H1 (cell line): ENCODE measurements at regions of chr5 and their contacts with region 1.

Region 1: DNA sequence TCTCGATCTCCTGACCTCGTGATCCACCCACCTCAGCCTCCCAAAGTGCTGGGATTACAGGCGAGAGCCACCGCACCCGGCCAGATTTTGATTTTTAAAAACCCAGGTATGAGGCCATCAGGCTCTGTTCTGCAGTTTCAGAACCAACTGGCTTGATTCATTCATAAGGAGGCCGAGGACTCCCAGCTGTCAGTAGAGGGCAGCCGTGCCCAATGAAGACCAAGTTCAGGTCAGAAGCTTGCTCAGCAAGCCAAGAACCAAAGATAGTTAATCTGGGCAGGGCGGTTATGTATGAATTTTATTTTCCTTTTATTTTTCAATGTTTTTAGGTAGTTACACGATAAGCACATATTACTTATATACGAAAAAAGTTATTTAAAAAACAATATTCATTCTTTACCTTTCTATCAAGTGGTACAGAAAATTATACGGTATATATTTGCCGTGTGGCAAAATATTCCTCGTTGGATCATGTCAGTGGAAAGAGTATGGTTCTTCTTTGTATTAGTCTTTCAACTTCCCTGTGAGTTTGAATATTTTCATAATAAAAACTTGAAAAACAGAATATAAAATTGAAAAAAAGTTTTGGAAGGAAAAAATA is 18.0 kb downstream of the MGAT1 start:
- DNase-seq: peak in 1 of 2 experiments; percentile 67
- H3K4me3 ChIP-seq: no peak overlapping the region; a peak in 1 of 8 replicates
- H3K27ac ChIP-seq: no peak overlapping the region
- H3K4me1 ChIP-seq: peaks cover 17 to 34% (median 26%) of the 10 kb centered on the region in 4 experiments
- H3K27me3 ChIP-seq: no peaks in the 10 kb centered on the region
- CTCF ChIP-seq: peak in 2 of 3 experiments; percentile 72 to 77; a peak in 3 of 4 replicates
- EP300 ChIP-seq: no peak
- POLR2A ChIP-seq: no peak
- RAD21 ChIP-seq: peak; percentile 80 to 89

Region 2: DNA sequence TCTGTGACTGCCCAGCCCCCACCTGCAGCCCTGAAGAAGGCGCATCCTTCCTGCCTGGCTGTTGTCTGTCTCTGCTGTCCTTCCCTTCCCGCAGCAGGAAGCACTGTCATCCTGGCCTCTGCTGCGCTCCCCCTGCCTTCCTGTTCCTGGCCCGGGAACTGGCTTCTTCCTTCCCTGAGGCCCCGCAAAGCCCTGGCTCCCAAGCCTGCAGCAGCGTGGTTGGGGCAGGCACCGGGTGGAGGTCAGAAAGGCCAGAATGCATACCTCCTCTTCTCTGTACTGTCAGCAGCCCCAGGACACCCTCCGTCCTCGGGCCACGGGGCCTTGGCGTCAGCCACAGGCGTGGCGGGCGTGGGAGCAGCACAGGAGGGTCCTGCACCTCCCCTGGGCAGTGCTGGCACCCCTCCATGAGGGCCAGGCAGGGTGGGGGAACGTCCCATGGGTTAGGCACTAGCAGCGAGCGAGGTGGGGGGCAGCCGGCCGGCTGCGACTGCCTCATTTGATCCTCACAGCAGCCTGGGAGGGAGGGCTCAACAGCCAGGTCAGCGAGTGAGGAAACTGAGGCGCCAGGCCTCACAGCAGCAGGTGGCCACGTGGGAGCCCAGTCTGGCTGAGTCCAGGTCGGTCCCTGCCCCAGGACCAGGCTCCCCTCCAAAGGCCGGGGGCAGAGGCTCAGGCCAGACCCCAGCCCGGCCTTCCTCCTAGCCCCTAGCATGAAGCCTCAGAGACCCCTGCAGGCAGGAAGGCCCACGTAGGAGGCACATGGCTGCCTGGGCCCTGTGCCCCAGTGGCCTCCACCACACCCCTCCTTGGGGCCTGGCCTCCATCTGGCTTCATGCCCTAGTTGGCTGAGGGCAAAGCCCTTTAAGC is 144.6 kb before region 1 on chr5:
- CTCF ChIA-PET with region 1: no interaction called
- POLR2A ChIA-PET with region 1: no interaction called
- DNase-seq: peak in 1 of 2 experiments; percentile 38
- H3K4me3 ChIP-seq: no peak overlapping the region
- H3K27ac ChIP-seq: no peak overlapping the region
- H3K4me1 ChIP-seq: no peaks in the 10 kb centered on the region
- H3K27me3 ChIP-seq: no peaks in the 10 kb centered on the region
- CTCF ChIP-seq: no peak
- EP300 ChIP-seq: no peak
- POLR2A ChIP-seq: no peak
- RAD21 ChIP-seq: no peak

Region 3: GRCh38 chr5:180802325-180803180 is 18.0 kb after region 1 on chr5 and contains the start of gene MGAT1:
- CTCF ChIA-PET with region 1: interaction called, 99 read pairs
- POLR2A ChIA-PET with region 1: interaction called, 37 read pairs
- DNase-seq: peak in 1 of 2 experiments; percentile 90
- H3K4me3 ChIP-seq: peak within 1 kb of the TSS; percentile 70 to 95 (median 84)
- H3K27ac ChIP-seq: peak within 1 kb of the TSS; percentile 95
- H3K4me1 ChIP-seq: peaks cover 4 to 24% (median 16%) of the 10 kb centered on the region in 4 experiments
- H3K27me3 ChIP-seq: no peaks in the 10 kb centered on the region
- CTCF ChIP-seq: no peak
- EP300 ChIP-seq: no peak
- POLR2A ChIP-seq: peak in 1 of 2 experiments; percentile 68; a peak in 2 of 3 replicates
- RAD21 ChIP-seq: no peak
- total RNA-seq, gene MGAT1: 77.0 and 83.8 TPM in 2 replicates

Region 4: DNA sequence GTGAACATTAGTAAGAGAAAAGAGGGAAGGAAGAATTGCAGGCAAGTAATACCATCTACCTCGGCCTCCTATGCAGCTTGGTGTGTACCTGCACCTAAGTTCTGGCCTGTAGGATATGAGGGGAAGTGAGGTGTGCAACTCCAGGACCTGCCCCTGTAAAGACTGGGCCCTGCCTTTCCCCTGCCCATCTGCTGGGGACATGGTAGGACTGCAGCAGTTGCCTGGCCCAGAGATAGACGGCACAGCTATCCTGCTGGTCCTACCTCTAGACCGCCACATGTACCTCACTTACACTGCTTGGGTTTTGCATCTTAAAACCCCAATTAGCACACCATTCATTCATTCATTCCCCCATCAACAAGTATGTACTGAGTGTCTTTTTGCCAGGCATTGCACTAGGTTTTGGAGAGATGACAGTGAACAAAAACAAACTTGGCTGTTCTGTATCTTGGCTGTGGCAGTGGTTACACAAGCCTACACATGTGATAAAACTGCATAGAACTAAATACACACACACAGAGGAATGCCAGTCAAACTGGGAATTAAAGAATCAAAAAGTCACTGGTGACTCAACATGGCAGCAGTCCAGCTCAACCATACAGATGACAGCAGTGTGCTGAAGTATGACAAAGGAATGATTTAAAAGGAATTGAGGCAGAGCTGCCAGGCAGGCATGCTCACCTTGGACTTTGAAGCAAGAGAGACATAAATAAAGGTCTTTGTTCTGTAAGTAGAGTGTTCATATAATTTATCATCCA is 41.4 kb after region 1 on chr5:
- CTCF ChIA-PET with region 1: interaction called, 10 read pairs
- POLR2A ChIA-PET with region 1: interaction called, 9 read pairs
- DNase-seq: no peak
- H3K4me3 ChIP-seq: no peak overlapping the region
- H3K27ac ChIP-seq: no peak overlapping the region
- H3K4me1 ChIP-seq: peaks cover 0 to 6% (median under 1%) of the 10 kb centered on the region in 4 experiments; a peak in 2 of 7 replicates
- H3K27me3 ChIP-seq: peaks cover 5 to 20% (median 16%) of the 10 kb centered on the region in 4 experiments
- CTCF ChIP-seq: no peak
- EP300 ChIP-seq: no peak
- POLR2A ChIP-seq: no peak
- RAD21 ChIP-seq: no peak

Region 5: GRCh38 chr5:180860887-180861822 is 76.6 kb after region 1 on chr5 and contains the start of gene ZFP62:
- CTCF ChIA-PET with region 1: interaction called, 14 read pairs
- POLR2A ChIA-PET with region 1: interaction called, 12 read pairs
- DNase-seq: peak; percentile 88 to 95
- H3K4me3 ChIP-seq: peak within 1 kb of the TSS; percentile 69 to 98 (median 88)
- H3K27ac ChIP-seq: peak within 1 kb of the TSS; percentile 80; the same call in 1 of the 2 replicates
- H3K4me1 ChIP-seq: peaks cover 0 to 8% (median 0%) of the 10 kb centered on the region in 4 experiments; a peak in 2 of 7 replicates
- H3K27me3 ChIP-seq: no peaks in the 10 kb centered on the region
- CTCF ChIP-seq: no peak
- EP300 ChIP-seq: no peak; a peak in 1 of 3 replicates
- POLR2A ChIP-seq: peak; percentile 35 to 59; a peak in 2 of 3 replicates
- RAD21 ChIP-seq: no peak
- total RNA-seq, gene ZFP62: 34.8 and 38.5 TPM in 2 replicates

Region 6: DNA sequence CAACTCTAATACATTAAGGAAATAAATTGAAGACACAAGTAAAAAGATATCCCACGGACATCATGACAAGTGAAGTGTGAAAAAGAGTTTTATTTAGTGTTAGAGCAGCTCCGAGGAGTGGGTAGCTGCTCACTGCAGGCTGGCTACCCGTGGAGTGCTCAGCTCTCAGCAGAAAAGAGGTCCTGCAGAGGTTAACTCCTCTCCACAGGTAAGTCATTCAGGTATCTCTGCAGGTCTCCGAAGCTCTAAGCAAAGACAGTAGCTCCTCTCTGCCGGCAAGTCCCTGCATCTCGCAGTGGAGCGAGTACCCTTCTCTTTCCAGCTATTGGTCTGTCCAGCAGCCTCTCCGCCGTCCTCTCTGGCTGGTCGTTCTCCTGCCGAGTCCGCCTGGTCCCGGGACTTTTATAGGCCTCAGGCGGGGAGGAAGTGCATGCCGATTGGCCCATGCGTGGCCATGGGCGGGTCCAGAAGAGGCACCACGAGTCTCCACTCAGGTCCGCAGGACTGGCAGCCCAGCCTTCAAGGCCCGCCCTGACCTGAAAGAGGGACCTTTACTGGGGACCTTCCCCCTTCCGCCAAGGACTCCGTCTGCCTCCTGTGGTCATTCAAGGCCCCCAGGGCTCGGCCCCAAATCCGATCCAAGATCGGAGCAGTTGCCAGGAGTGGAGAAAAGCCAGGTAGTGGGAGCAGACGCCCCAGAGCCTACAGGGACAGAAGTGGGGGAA is 285.3 kb after region 1 on chr5:
- CTCF ChIA-PET with region 1: no interaction called
- POLR2A ChIA-PET with region 1: no interaction called
- DNase-seq: peak in 1 of 2 experiments; percentile 85
- H3K4me3 ChIP-seq: peak overlapping the region in 3 of 4 experiments; percentile 14 to 49 (median 23); a peak in 6 of 8 replicates
- H3K27ac ChIP-seq: no peak overlapping the region
- H3K4me1 ChIP-seq: peaks cover 0 to 5% (median 3%) of the 10 kb centered on the region in 4 experiments; a peak in 3 of 7 replicates
- H3K27me3 ChIP-seq: no peaks in the 10 kb centered on the region; a peak in 2 of 7 replicates
- CTCF ChIP-seq: no peak
- EP300 ChIP-seq: no peak
- POLR2A ChIP-seq: peak; percentile 50 to 85
- RAD21 ChIP-seq: no peak